Activated CD8-positive, alpha-beta memory T cell treated with anti-CD3 and anti-CD28 coated beads, Interleukin-2, amount 10 ng/mL, durations not matched to agents 7 days and 5 days (primary cell): ENCODE measurements at regions of chr17 and their contacts with region 1.

Region 1: DNA sequence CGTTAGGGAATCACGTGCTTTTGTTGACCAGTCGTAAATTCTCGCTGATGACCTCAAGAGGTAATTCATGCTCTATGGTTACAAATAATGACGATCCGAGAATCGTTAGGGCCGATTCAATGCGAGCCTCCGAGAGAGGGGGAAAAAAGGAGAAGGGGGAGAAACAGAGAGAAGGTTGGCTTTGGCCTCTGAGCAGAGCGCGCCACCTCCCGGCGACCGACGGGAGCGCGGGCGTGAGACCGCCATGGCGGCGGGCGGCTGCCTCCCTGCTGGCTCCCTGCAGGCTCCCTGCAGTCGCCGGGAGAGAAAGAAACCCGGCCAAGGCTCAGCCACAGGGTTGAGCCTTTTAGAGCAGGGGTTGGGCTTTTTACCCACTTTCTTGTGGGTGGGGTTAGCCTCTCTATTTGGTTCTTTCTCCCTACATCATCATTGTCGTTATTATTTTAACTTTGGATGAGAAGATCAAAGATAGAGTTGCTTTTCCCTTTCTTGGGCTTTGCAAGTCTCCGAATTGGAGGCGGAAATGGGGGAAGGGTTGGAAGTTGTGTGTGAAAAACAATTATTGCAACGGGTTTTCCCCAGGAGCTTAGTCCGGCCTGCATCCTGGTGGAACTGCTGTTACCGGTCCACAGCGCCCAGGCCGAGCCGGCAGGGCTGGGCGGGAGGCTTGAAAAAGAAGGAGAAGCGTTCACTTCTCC is 410 bp upstream of the HOXB5 start:
- DNase-seq: peak; percentile 86
- ATAC-seq: peak; percentile 60
- H3K4me3 Mint-ChIP-seq: peak overlapping the region; percentile 73
- H3K27ac Mint-ChIP-seq: no peak overlapping the region
- H3K4me1 Mint-ChIP-seq: peaks cover 38% of the 10 kb centered on the region
- H3K27me3 Mint-ChIP-seq: peaks cover 85% of the 10 kb centered on the region

Region 2: DNA sequence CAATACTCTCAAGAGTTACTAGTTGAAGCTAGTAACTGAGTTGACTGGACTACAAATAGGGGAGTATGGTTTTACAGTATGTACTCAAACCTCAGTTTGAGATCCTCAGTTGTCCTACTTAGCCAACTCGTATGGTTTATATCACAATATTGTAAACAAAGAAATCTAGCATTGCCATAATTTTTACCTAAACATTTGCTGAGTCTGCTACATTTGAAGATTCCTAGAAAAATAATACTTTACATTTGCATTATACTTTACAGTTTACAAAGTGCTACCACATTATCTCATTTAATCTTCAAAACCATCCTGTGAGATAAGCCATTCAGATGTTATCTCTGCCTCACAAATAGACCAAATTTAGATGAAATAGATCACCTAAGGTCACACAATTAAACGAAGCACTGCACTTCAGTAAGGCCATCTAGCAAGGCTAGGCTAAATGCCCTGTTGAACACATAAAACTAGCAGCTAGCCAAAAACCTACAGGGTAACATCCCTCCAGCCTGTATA is 509.0 kb before region 1 on chr17:
- CTCF ChIA-PET with region 1: interaction called, 18 read pairs
- DNase-seq: no peak
- ATAC-seq: no peak
- H3K4me3 Mint-ChIP-seq: no peak overlapping the region
- H3K27ac Mint-ChIP-seq: no peak overlapping the region
- H3K4me1 Mint-ChIP-seq: peaks cover 12% of the 10 kb centered on the region
- H3K27me3 Mint-ChIP-seq: no peaks in the 10 kb centered on the region

Region 3: GRCh38 chr17:48259694-48260291 is 334.2 kb before region 1 on chr17:
- CTCF ChIA-PET with region 1: interaction called, 25 read pairs
- DNase-seq: no peak
- ATAC-seq: no peak
- H3K4me3 Mint-ChIP-seq: no peak overlapping the region
- H3K27ac Mint-ChIP-seq: no peak overlapping the region
- H3K4me1 Mint-ChIP-seq: peaks cover 5% of the 10 kb centered on the region
- H3K27me3 Mint-ChIP-seq: no peaks in the 10 kb centered on the region

Region 4: GRCh38 chr17:48335858-48336500 is 258.0 kb before region 1 on chr17:
- CTCF ChIA-PET with region 1: interaction called, 25 read pairs
- DNase-seq: no peak
- ATAC-seq: peak; percentile 63
- H3K4me3 Mint-ChIP-seq: no peak overlapping the region
- H3K27ac Mint-ChIP-seq: no peak overlapping the region
- H3K4me1 Mint-ChIP-seq: peaks cover 15% of the 10 kb centered on the region
- H3K27me3 Mint-ChIP-seq: no peaks in the 10 kb centered on the region

Region 5: DNA sequence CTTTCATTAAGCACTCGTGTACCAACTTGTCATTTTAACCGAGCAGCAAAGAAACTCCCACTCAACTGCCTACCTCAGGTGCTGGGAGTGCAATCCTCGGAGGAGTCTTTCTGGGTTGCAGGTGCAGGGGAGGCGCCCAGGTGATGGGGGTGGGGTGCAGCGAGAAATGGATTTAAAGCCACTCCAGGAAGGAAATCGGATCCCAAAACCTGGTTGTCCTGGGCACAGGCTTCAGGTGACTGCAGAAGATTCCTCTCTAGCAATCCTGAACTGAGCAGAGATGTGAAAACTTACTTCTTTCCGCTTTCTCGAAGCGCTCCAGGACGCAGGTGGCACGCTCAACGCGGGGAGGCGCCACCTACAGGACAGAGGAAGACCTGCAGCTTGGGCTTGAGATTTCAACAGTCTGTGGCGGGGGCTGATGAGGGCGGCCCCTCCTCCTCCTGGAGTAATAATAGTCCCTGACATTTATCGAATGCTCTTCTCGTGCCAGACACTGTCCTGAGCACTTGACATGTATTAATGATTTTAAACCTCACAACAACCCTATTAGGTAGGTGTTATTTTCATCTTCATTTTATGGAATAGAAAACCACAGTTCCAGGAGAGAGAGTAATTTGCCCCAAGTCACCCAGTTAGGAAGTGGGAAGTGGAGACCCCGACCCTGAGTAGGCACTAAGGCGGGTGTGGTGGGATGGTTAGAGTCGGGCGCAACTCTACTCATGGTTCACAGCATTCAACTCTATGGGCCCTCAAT is 136.7 kb before region 1 on chr17:
- CTCF ChIA-PET with region 1: interaction called, 11 read pairs
- DNase-seq: peak; percentile 84
- ATAC-seq: peak; percentile 75
- H3K4me3 Mint-ChIP-seq: peak overlapping the region; percentile 60
- H3K27ac Mint-ChIP-seq: peak overlapping the region; percentile 56
- H3K4me1 Mint-ChIP-seq: peaks cover 71% of the 10 kb centered on the region
- H3K27me3 Mint-ChIP-seq: no peaks in the 10 kb centered on the region

Region 6: DNA sequence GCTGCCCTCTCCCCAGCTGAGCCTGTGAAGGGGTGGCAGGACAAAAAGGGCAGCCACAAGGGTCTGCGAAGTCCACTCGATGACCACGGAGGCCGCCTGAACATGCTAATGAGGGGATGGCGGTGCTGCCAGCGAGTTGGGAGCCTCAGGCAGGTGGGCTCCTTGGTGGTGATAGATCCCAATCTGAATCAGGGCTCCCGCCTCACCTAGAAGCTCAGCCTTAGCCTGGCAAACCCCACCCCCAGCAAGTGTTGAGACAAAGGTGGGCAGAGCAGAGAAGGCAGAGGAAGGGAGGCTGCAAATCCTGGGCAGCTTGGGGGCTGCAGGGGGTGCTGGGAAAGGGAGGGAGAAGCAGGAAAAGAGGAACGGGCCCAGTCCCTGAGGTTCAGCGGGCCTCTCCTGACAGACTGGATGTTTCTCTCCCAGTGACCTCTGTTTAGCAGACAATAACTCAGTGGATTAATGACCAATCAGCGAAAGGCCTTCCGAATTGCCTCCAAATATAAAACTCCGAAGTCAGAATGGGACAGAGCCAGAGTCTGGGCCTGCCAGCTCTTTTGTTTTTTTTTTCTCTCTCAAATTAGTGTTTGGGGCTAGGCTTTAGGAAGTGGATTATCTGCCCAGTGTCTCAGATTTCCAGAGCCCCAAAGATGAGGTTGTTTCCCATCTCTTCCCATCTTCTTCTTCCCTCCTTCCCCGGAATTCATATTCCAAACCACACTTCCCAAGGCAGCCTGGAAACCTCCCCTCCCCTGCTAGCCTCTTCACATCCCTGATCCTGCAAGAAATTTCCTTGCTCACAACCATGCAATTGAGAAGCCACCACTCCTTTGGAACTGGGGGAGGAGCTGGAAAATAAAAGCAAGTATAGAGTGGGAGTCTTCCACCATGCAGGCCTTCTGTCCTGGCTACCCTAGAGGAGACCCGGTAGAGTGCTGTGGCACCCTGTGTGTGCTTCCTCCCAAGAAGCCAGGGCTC is 33.9 kb before region 1 on chr17:
- CTCF ChIA-PET with region 1: no interaction called
- DNase-seq: no peak
- ATAC-seq: no peak
- H3K4me3 Mint-ChIP-seq: no peak overlapping the region
- H3K27ac Mint-ChIP-seq: no peak overlapping the region
- H3K4me1 Mint-ChIP-seq: peaks cover 16% of the 10 kb centered on the region
- H3K27me3 Mint-ChIP-seq: peaks cover 8% of the 10 kb centered on the region

Region 7: GRCh38 chr17:48610282-48611211 is 16.6 kb after region 1 on chr17 and contains the start of gene HOXB7:
- CTCF ChIA-PET with region 1: interaction called, 40 read pairs
- DNase-seq: peak; percentile 81
- ATAC-seq: peak; percentile 54
- H3K4me3 Mint-ChIP-seq: peak within 1 kb of the TSS; percentile 81
- H3K27ac Mint-ChIP-seq: peak within 1 kb of the TSS; percentile 22
- H3K4me1 Mint-ChIP-seq: peaks cover 35% of the 10 kb centered on the region
- H3K27me3 Mint-ChIP-seq: peaks cover 79% of the 10 kb centered on the region
- total RNA-seq, gene HOXB7: 1.7 TPM